Activated CD8-positive, alpha-beta T cell treated with anti-CD3 and anti-CD28 coated beads for 36 hours (primary cell): ENCODE measurements at regions of chr17 and their contacts with region 1.

Region 1: DNA sequence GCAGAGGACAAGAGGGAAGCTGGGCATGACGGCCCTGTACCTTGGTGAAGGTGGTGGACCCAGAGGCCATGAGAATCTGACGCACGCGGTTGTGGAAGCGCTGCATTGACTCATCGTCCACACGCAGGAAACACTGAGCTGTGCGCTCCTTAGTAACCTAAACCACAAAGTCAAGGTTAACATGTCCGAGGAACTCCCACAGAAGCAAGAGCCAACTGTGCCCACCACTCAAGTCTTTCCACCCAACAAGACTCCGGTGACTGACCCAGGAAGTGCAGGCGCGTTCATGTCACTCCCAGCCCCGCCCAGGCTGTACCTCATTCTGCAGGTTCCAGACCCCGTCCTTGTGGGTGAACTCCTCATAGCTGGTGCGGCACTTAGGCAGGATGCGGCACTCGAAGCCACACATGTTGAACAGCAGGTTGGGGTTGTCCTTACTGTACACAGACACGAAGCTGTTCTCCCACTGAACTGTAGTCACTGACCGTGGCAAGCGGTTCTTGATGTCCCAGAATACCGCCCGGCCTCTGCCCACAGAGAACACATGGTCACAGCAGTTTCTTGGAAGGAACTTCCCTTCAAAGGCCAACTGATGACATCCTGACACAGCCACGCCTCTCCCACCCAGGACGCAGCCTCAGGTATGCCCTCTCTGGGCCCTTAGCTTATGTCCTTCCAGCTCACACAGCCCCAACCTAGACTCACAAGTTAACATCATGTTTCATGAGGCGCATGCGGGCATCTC is 11.5 kb downstream of the PRPF8 start:
- DNase-seq: no peak
- ATAC-seq: peak; percentile 26
- H3K4me3 Mint-ChIP-seq: no peak overlapping the region
- H3K27ac Mint-ChIP-seq: peak overlapping the region; percentile 39
- H3K4me1 Mint-ChIP-seq: peaks cover 16% of the 10 kb centered on the region
- H3K27me3 Mint-ChIP-seq: no peaks in the 10 kb centered on the region
- CTCF ChIP-seq: no peak

Region 2: GRCh38 chr17:1661045-1661444 is 12.2 kb before region 1 on chr17:
- CTCF ChIA-PET with region 1: interaction called, 13 read pairs
- POLR2A ChIA-PET with region 1: interaction called, 6 read pairs
- intact Hi-C with region 1: no loop called
- DNase-seq: no peak
- ATAC-seq: no peak
- H3K4me3 Mint-ChIP-seq: no peak overlapping the region
- H3K27ac Mint-ChIP-seq: no peak overlapping the region
- H3K4me1 Mint-ChIP-seq: no peaks in the 10 kb centered on the region
- H3K27me3 Mint-ChIP-seq: no peaks in the 10 kb centered on the region
- CTCF ChIP-seq: no peak

Region 3: GRCh38 chr17:1684378-1685189 is 11.4 kb after region 1 on chr17 and contains the start of gene PRPF8:
- CTCF ChIA-PET with region 1: interaction called, 22 read pairs
- POLR2A ChIA-PET with region 1: interaction called, 28 read pairs
- intact Hi-C with region 1: no loop called
- DNase-seq: peak; percentile 99
- ATAC-seq: peak; percentile 100
- H3K4me3 Mint-ChIP-seq: peak within 1 kb of the TSS; percentile 96
- H3K27ac Mint-ChIP-seq: peak within 1 kb of the TSS; percentile 93
- H3K4me1 Mint-ChIP-seq: peaks cover 32% of the 10 kb centered on the region
- H3K27me3 Mint-ChIP-seq: no peaks in the 10 kb centered on the region
- CTCF ChIP-seq: no peak
- total RNA-seq, gene PRPF8: 370 to 428 TPM

Region 4: DNA sequence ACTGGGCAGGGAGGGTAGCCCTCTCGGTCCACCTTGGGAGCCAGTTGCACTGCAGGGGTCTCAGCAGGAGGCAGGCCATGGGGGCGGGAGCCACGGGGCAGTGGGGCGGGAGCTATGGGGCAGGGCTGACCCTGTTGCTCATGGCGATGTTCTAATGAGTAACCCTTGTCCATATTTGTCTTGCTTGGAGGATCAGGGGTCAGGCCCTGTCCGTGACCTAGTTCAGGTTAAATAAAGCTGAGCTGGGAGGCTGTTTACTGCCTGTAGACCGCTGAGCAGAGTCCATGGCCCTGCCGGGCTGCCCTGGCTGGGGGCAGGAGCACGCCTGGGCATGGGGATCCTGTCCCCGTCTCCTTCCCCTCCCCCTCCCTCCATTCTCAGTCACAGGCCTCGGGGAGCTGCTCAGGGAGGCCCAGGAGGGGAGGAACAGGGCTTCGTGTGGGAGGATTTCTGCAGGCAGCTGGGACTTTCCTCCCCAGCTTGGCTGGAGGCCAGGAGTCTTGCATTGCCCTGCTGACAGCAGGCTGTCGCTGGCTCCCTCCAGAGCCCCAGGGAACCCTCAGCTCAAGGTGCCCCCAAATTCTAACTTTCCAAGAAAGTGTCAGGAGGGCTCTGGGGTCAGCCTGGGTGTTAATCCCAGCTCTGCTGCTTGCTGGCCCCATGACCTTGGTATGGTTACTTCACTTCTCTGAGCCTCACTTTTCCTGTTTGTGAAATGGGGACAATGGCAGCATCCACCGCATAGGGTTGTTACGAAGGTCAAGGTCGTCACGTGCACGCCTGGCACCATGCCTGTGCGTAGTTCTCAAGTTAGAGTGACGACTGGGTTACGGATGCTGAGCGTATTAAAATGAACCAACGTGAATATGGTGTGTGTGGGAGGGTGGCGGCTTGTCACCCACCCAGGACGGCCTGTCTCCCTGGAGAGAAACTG is 63.4 kb after region 1 on chr17:
- CTCF ChIA-PET with region 1: no interaction called
- POLR2A ChIA-PET with region 1: no interaction called
- intact Hi-C with region 1: no loop called
- DNase-seq: peak; percentile 82
- ATAC-seq: peak; percentile 85
- H3K4me3 Mint-ChIP-seq: no peak overlapping the region
- H3K27ac Mint-ChIP-seq: peak overlapping the region; percentile 76
- H3K4me1 Mint-ChIP-seq: peaks cover 9% of the 10 kb centered on the region
- H3K27me3 Mint-ChIP-seq: no peaks in the 10 kb centered on the region
- CTCF ChIP-seq: no peak